ENCODE measurements at regions of chr1 and their contacts with region 1.

Region 1: GRCh38 chr1:89757532-89757931 is 63.3 kb upstream of the LRRC8D start:
- DNase-seq: peak; percentile 43
- ATAC-seq: peak; percentile 62 to 72

Region 2: GRCh38 chr1:89363196-89363595 is 394.3 kb before region 1 on chr1:
- intact Hi-C with region 1: no loop called
- DNase-seq: no peak
- ATAC-seq: peak in 1 of 2 donors; percentile 35

Region 3: GRCh38 chr1:89444791-89445190 is 312.7 kb before region 1 on chr1:
- intact Hi-C with region 1: no loop called
- DNase-seq: no peak
- ATAC-seq: no peak

Region 4: DNA sequence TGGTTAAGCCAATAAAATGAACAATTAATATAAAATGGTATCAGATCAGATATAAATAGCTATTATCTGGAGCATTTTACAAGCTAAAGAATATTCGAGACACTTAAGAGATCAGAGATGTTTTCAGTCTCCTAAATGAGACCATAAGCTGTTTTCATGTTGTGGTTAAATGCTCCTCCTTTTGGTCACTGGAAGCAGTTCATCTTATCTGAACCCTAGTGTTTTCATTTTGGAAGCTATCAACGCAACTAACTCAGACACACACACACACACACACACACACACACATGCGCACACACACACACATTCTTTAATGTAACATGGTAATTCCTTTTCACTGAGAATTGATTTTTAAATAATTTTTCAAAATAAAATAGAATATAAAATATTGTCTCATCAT is 134.6 kb before region 1 on chr1:
- intact Hi-C with region 1: no loop called
- DNase-seq: no peak
- ATAC-seq: no peak

Region 5: DNA sequence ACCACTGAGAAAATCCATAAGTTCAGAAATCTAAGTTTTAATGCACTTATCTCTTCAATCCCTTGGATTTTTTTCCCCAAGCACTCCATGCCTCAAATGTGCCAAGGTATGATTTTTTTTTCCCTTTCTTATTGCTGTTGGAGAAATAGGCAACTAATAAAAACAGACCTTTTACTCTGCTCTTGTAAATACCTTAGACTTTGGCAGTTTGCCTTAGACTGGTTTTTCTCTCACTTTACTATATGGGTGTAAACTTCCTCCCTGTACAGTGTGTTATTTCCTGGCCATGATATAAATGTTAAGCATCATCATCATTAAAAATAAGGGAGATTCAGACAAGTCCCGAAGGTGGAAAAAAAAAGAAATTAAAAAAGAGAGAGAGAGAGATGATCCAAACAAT is 58.9 kb before region 1 on chr1:
- intact Hi-C with region 1: loop called in 1 of 2 experiments (anchors 5 kb)
- DNase-seq: no peak
- ATAC-seq: no peak

Region 6: DNA sequence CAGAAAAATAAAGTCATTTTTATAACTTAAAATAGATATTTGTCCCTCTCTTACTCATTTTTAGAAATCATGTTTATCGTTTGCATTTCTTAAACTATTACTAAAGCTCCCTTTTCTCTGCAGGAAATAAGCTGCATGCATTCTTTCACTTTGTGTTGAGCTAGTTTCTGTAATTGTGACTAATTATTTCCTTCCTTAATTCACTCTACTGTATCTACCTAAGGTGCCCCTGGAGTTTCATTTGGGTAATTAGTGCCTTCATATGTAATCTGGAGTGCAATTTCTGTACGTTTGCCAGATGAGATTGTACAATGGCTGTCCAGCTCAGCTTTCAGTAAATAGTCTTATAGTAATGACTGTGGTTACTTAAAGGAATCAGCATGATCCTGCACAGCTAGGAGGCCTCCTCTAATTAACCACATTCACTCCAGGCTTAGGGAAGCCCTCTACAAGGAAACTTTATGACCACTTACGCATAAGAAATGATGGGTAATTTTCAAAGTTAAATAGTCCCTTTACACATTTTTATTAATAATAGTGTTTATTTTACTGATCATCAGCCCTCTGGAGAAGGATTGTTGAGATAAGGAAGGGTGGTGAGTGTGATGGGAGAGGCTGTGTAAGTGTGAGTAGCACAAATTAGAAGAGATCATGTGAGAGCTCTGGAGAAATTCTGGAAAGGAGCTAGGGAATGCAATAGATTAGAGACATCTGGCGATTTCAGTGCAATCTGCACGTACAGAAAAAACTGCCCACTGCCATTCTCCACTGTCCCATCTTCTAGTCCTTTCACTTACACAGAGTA is 37.8 kb before region 1 on chr1:
- intact Hi-C with region 1: loop called in 1 of 2 experiments (anchors 5 kb)
- DNase-seq: no peak
- ATAC-seq: peak; percentile 21 to 23

Region 7: DNA sequence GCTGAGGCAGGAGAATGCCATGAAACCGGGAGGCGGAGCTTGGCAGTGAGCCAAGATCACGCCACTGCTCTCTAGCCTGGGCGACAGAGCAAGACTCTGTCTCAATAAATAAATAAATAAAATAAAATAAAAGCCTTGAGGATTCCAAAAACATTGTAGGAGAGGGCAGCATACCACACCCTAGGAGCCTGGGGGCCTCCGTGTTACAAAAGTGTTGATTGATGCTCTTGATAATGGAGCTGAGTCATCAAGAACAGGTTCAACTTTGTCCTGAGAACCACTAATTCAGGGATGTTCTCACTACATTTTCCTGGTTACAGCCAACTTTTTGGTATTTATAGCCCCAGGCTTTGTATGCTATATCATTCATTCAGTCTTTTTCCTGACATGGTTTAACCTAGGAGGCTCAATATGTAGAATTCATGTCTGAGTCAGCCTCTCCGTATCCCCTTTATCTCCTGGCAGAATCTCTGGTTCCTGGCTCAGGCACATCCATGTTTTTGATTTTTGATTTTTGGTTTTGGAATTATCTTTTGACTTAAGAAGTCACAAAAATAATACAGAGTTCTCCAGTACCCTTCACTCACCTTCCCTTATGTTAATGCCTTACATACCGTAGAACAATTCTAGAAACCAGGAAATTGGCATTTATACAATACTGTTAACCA is 132.7 kb after region 1 on chr1:
- intact Hi-C with region 1: no loop called
- DNase-seq: no peak
- ATAC-seq: peak in 1 of 2 donors; percentile 44

Measured in left cardiac atrium (tissue), 4 donors.